ENCODE measurements at regions of chr1 and their contacts with region 1.

Region 1: DNA sequence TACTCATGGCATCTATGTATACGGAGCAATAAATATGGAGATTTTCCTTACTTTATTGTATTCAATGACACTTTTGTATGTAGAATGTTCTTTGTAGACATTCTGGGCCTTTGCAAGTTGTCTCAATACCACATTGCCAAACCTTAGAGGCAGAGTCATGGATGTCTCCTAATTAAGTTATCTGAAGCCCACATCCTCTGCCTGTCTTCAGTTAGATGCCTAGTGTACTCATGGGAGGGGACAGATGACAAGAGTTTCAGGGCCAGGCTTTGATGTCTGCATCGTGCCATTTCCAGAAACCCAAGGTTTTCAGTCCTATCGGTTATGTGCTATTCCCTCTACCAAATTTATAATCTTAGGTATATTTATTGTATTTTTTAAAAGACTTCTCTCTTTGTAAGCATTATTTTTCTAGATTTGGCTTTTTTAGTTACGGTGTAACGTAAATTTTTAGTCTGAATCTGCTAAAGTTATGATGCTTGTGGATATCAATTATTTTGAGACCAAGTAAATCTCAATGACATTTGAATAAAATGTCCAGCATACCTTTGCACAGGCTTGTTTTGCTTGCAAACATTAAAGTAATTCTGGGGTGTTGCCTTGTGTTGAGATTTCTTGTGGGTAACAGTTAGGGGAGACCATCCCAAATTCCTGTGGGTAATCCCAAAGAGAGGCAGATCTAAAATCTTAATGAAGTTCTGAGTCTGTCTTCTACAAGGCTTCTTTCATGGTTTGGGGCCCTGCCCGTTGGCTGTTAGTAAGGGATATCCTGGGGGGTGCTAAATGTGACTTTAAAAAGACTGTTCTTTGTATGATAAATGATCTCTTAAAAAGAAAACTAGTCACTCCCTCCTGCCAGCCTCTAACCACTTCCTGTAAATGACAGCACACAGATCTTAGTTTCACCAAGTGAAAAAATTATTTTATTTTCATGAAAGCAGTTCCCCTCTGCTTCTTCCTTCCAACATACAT is 8.0 kb upstream of the MACF1 start:
- DNase-seq: no peak
- H3K4me3 ChIP-seq: no peak overlapping the region
- H3K27ac ChIP-seq: 0 out of 2 replicates have a peak overlapping the region, but pooled peaks have one; percentile 29
- H3K4me1 ChIP-seq: peaks cover 47% of the 10 kb centered on the region
- H3K27me3 ChIP-seq: no peaks in the 10 kb centered on the region
- CTCF ChIP-seq: no peak

Region 2: DNA sequence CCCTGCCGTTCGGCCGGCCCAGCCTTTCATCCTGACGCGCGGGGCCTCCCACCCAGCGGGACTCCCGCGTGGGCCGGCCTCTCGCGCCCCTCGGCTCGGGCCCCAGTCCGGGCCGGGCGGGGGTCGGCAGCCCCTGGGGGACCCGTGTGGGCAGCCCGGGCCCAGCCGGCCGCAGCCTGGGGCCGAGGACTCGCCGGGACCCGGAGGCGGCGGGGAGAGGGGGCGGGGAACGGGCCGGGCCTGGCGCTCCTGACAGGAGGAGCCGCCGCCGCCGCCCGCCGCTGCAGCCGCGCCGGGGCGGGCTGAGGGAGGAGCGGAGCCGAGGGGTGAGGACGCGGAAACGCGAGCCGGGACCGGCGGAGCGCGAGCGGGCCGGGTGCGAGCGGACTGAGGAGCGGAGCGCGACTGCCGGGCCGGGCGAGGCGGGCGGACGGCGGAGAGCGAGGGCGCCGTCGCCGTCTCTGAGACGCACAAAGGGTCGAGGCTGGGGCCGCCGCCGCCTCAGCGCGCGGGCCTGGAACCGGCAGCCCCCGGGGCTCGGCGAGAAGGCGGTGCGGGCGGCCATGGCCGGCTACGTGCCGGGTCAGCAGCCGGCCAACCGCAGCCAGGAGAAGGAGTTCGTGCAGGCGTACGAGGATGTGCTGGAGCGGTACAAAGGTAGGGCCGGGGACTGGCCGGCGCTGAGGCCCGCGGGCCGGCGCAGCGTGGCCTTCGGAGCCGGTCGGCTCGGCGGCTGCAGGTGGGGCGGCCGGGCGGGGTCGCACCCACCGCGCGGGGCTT is 91.3 kb before region 1 on chr1:
- CTCF ChIA-PET with region 1: interaction called, 35 read pairs
- POLR2A ChIA-PET with region 1: interaction called, 13 read pairs
- intact Hi-C with region 1: loop called (anchors 1 kb)
- DNase-seq: peak in 1 of 2 experiments; percentile 81
- H3K4me3 ChIP-seq: peak overlapping the region; percentile 95
- H3K27ac ChIP-seq: peak overlapping the region; percentile 74
- H3K4me1 ChIP-seq: peaks cover 57% of the 10 kb centered on the region
- H3K27me3 ChIP-seq: no peaks in the 10 kb centered on the region
- CTCF ChIP-seq: no peak

Region 3: GRCh38 chr1:39132505-39133339 is 63.8 kb before region 1 on chr1:
- CTCF ChIA-PET with region 1: interaction called, 21 read pairs
- POLR2A ChIA-PET with region 1: no interaction called
- intact Hi-C with region 1: loop called (anchors 1 kb)
- DNase-seq: peak; percentile 94 to 95
- H3K4me3 ChIP-seq: no peak overlapping the region
- H3K27ac ChIP-seq: peak overlapping the region; percentile 77
- H3K4me1 ChIP-seq: peaks cover 70% of the 10 kb centered on the region
- H3K27me3 ChIP-seq: no peaks in the 10 kb centered on the region
- CTCF ChIP-seq: peak; percentile 67

Region 4: GRCh38 chr1:39214998-39215873 is 18.7 kb after region 1 on chr1:
- CTCF ChIA-PET with region 1: interaction called, 14 read pairs
- POLR2A ChIA-PET with region 1: interaction called, 4 read pairs
- intact Hi-C with region 1: loop called (anchors 2 kb)
- DNase-seq: no peak
- H3K4me3 ChIP-seq: no peak overlapping the region
- H3K27ac ChIP-seq: 0 out of 2 replicates have a peak overlapping the region, but pooled peaks have one; percentile 10
- H3K4me1 ChIP-seq: peaks cover 44% of the 10 kb centered on the region
- H3K27me3 ChIP-seq: no peaks in the 10 kb centered on the region
- CTCF ChIP-seq: no peak

Region 5: DNA sequence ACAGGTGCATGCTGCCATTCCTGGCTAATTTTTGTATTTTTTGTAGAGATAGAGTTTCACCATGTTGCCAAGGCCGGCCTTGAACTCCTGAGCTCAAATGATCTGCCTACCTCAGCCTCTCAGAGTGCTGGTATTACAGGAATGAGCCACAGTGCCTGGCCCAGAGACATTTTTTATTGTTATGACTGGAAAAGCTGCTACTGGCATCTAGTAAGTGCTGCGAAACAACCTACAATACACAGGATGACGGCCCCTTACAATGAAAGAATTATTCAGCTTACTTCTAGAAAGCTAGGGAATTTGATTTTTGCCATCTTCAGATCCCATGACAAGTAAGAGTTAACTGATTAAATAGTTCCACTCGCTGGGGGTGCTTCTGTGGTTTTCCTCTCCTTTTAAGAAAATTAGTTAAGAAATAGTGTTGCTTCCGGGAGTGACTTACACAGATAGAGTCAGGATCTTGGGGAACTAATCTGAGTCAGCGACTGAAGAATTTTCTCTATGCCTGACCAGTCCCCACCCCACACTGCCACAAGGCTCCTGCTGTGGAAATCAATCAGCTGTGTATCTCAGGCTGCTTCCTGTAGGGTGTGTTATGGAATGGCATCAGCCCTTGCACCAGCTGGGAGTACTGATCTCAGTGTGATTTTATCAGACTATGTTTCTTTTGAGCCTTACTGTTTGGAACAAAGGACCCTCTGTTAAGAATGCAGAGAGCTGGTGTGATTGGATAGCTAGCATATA is 201.9 kb after region 1 on chr1:
- CTCF ChIA-PET with region 1: interaction called, 3 read pairs
- POLR2A ChIA-PET with region 1: no interaction called
- intact Hi-C with region 1: loop called (anchors 2 kb)
- DNase-seq: peak; percentile 91 to 100
- H3K4me3 ChIP-seq: peak overlapping the region; percentile 22; the same call in 1 of the 2 replicates
- H3K27ac ChIP-seq: peak overlapping the region; percentile 91
- H3K4me1 ChIP-seq: peaks cover 66% of the 10 kb centered on the region
- H3K27me3 ChIP-seq: no peaks in the 10 kb centered on the region
- CTCF ChIP-seq: no peak